AG04450 (cell line): ENCODE measurements at regions of chr19 and their contacts with region 1.

Region 1: GRCh38 chr19:48999481-49000325 is 6.0 kb downstream of the RUVBL2 start:
- DNase-seq: peak; percentile 43
- H3K4me3 ChIP-seq: no peak overlapping the region
- H3K27ac ChIP-seq: no peak overlapping the region
- H3K27me3 ChIP-seq: no peaks in the 10 kb centered on the region
- CTCF ChIP-seq: peak; percentile 85

Region 2: DNA sequence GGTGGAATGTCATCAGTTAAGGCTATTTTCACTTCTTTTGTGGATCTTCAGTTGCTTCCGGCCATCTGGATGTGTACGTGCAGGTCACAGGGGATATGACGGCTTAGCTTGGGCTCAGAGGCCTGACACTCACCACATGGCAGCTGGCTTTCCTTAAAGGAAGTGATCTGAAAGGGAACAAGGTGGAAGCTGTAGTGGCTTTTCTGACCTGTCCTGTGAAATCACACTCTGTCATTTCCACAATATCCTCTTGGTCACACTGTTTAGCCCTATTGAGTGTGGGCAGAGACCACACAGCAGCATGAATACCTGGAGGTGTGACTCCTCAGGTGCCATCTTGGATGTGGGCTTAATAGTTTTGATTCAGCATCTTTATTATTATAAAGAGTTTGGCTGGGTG is 49.5 kb before region 1 on chr19:
- CTCF ChIA-PET with region 1: no interaction called
- POLR2A ChIA-PET with region 1: no interaction called
- DNase-seq: no peak
- H3K4me3 ChIP-seq: no peak overlapping the region
- H3K27ac ChIP-seq: no peak overlapping the region
- H3K27me3 ChIP-seq: no peaks in the 10 kb centered on the region
- CTCF ChIP-seq: no peak

Region 3: DNA sequence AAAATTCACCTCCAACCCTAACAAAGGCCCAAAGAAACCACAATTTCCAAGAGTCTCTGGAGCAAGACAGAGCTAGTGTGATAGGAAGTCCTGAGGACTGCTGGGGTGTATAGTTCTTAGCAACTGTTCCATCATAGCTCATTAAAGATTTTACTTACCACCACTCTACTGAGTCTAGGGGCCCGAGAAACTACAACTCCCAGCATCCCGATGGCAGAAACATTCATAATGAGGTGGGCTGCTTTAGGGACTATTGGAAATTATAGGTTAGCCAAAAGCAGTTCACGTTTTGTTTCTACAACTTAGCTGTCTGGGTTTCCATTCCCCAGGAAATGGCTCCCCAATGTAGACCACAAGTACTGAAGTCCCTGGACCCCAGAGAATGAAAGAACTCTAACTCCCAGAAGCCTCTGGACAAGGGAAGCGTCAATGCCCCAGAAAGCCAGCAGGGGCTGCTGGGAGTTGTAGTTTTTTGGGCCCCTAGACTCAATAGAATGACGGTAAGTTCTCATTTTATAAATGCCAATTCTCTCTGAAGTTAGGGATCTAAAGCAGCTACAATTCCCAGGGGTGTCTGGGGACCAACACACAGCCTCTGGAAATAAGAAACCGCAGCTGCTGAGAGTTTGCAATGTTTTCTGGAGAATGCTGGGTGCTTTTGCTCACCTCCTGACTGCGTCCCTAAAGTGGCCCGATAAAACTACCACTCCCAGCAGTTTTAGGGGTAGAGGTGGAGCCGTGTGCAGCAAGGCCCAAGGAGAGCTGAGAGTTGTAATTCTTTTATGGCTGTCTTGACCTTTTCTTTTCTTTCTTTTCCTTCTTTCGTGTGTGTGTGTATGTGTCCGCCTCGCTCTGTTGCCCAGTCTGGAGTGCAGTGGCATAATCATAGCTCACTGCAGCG is 23.5 kb before region 1 on chr19:
- CTCF ChIA-PET with region 1: interaction called, 11 read pairs
- POLR2A ChIA-PET with region 1: no interaction called
- DNase-seq: no peak
- H3K4me3 ChIP-seq: no peak overlapping the region
- H3K27ac ChIP-seq: no peak overlapping the region
- H3K27me3 ChIP-seq: no peaks in the 10 kb centered on the region
- CTCF ChIP-seq: no peak

Region 4: GRCh38 chr19:49009828-49010227 is 10.1 kb after region 1 on chr19:
- CTCF ChIA-PET with region 1: interaction called, 30 read pairs
- POLR2A ChIA-PET with region 1: no interaction called
- DNase-seq: no peak
- H3K4me3 ChIP-seq: no peak overlapping the region
- H3K27ac ChIP-seq: no peak overlapping the region
- H3K27me3 ChIP-seq: no peaks in the 10 kb centered on the region
- CTCF ChIP-seq: no peak

Region 5: GRCh38 chr19:49017666-49018351 is 18.1 kb after region 1 on chr19:
- CTCF ChIA-PET with region 1: interaction called, 28 read pairs
- POLR2A ChIA-PET with region 1: interaction called, 3 read pairs
- DNase-seq: no peak
- H3K4me3 ChIP-seq: peak overlapping the region; percentile 49
- H3K27ac ChIP-seq: no peak overlapping the region
- H3K27me3 ChIP-seq: no peaks in the 10 kb centered on the region
- CTCF ChIP-seq: peak; percentile 58

Region 6: DNA sequence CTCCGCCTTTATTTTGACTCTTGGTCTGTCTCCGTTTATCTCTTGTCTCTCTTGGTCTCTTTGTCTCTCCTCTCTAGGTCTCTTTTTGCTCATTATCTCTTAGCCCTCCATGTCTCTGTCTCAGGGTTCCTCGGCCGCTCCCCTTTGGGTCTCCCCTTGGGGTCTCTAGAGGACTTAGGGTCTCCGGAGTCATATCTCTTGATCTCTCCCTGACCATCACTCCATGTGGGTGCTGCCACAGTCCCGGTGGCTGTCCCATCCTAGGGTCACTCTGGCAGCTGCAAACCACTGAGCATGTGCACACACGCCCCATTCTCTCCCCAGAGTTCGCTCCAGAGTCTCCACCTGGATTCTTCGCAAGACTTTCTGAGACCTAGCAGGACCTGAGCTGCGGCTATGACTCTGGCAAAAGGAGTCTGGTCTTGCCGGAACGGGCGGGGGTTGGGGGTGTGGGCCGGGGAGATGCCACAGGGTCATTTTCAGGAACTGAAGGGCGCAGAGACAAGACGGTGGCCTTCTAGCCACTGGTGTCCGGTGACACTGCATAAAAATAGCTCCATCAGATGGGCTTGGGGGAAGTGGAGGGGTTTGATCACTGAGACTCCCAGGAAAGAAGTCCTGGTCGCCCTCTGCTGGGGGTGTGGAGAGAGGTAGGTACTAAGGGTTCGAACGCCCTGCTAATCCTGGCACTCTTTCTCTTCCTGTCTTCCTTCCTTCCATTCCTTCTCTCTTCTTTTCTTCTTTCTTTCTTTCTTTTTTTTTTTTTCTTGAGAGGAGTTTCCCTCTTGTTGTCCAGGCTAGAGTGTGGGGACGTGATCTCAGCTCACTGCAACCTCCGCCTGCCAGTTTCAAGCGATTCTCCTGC is 74.0 kb after region 1 on chr19:
- CTCF ChIA-PET with region 1: interaction called, 27 read pairs
- POLR2A ChIA-PET with region 1: no interaction called
- DNase-seq: no peak
- H3K4me3 ChIP-seq: no peak overlapping the region
- H3K27ac ChIP-seq: no peak overlapping the region
- H3K27me3 ChIP-seq: peaks cover 19% of the 10 kb centered on the region
- CTCF ChIP-seq: peak; percentile 42